GM12878 (cell line): ENCODE measurements at regions of chr3 and their contacts with region 1.

Region 1: DNA sequence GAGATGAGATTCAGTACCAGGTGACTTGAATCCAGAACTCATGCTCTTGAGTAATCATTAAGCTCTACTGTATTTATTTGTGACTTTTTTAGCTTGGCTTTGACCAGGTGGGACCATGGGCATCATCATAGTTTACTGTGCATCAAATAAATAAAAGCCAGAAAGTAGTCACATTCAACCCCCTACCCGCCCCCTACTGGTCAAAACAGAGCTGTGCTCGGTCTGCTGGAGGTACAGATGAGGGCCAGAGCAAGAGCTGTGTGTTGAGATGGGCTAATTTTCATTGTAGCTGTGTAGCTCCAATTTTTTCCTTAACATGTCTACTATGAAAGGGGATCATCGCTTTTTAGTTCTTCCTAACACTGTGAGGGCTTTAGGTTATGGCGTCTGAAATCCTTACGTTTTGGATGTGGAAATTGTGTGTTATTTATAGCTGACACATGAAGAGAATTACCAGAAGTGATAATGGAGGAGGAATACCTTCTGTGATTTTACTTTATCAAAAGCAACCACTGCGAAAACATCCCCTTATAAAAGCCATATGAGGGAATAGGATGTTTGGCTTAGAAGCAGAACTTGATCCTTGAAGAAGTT is 375.1 kb downstream of the PTPRG start:
- DNase-seq: no peak
- ATAC-seq: peak; percentile 79
- H3K4me3 ChIP-seq: no peak overlapping the region
- H3K27ac ChIP-seq: no peak overlapping the region
- H3K4me1 ChIP-seq: no peaks in the 10 kb centered on the region
- H3K27me3 ChIP-seq: no peaks in the 10 kb centered on the region
- CTCF ChIP-seq: peak; percentile 51 to 79 (median 76)
- EP300 ChIP-seq: no peak
- POLR2A ChIP-seq: no peak
- RAD21 ChIP-seq: peak; percentile 55

Region 2: GRCh38 chr3:61574854-61575253 is 361.6 kb before region 1 on chr3:
- CTCF ChIA-PET with region 1: interaction called, 10 read pairs
- POLR2A ChIA-PET with region 1: interaction called, 4 read pairs
- RAD21 ChIA-PET with region 1: no interaction called
- SMC1A ChIA-PET with region 1: no interaction called
- in situ Hi-C with region 1: no loop called
- intact Hi-C with region 1: no loop called
- DNase-seq: no peak
- ATAC-seq: peak; percentile 28
- H3K4me3 ChIP-seq: no peak overlapping the region
- H3K27ac ChIP-seq: no peak overlapping the region
- H3K4me1 ChIP-seq: no peaks in the 10 kb centered on the region
- H3K27me3 ChIP-seq: no peaks in the 10 kb centered on the region
- CTCF ChIP-seq: no peak
- EP300 ChIP-seq: no peak
- POLR2A ChIP-seq: no peak
- RAD21 ChIP-seq: no peak

Region 3: DNA sequence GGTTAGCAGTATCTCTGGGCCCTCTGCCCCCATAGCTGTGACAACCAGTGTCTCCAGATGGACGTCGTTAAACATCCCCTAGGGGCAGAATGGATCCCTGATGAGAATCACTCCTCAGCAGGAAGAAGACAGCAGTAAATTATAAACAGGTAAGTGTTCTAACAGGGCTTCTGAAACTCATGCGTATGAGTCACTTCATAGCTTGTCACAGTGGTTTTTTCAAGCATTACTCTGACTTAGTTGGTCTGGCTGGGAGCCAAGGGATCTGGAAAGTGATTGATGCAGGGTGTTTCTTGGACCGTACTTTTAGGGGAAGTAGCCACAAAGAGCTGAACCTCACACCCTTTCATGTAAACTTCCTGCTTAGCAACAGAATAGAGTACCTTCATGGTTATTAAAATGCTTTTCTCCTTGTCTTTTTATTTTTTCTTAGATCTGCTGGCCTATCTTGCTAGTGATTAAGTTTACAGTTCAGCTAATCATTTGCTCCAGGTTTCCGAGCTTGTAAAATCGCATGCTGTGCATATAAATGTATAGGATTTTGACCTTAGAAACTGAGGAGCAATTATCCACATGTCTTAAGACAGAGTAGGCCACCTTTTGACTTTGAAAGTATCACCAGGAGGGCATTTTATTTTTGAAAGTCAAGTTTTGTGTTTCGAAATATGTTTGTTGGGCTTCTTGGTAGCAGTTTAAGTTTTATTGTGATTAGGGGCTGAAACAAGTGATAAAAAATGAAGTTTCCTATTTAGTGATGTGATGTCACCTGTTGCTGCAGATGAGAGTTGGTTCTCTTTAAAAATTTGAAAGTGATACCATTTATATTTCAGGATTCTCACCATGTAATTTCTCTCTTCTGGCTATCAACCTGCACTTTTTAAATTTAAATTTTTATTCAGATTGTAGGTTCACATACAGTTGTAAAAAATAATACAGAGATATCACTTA is 41.2 kb before region 1 on chr3:
- CTCF ChIA-PET with region 1: interaction called, 29 read pairs
- POLR2A ChIA-PET with region 1: no interaction called
- RAD21 ChIA-PET with region 1: interaction called, 21 read pairs
- SMC1A ChIA-PET with region 1: interaction called, 22 read pairs
- in situ Hi-C with region 1: no loop called
- intact Hi-C with region 1: no loop called
- DNase-seq: peak; percentile 87
- ATAC-seq: peak; percentile 90
- H3K4me3 ChIP-seq: no peak overlapping the region
- H3K27ac ChIP-seq: no peak overlapping the region; the same call in 1 of the 2 replicates
- H3K4me1 ChIP-seq: peaks cover 5% of the 10 kb centered on the region; the same call in 1 of the 2 replicates
- H3K27me3 ChIP-seq: no peaks in the 10 kb centered on the region
- CTCF ChIP-seq: peak in 1 of 3 experiments; percentile 21; a peak in 1 of 6 replicates
- EP300 ChIP-seq: peak; percentile 62 to 92
- POLR2A ChIP-seq: no peak
- RAD21 ChIP-seq: no peak; the same call in 1 of the 2 replicates

Region 4: GRCh38 chr3:61919402-61919801 is 17.0 kb before region 1 on chr3:
- CTCF ChIA-PET with region 1: interaction called, 55 read pairs
- POLR2A ChIA-PET with region 1: interaction called, 4 read pairs
- RAD21 ChIA-PET with region 1: interaction called, 32 read pairs
- SMC1A ChIA-PET with region 1: interaction called, 159 read pairs
- in situ Hi-C with region 1: no loop called
- intact Hi-C with region 1: no loop called
- DNase-seq: no peak
- ATAC-seq: no peak
- H3K4me3 ChIP-seq: no peak overlapping the region
- H3K27ac ChIP-seq: no peak overlapping the region
- H3K4me1 ChIP-seq: no peaks in the 10 kb centered on the region
- H3K27me3 ChIP-seq: peaks cover 0 to 2% of the 10 kb centered on the region in 2 experiments; a peak in 1 of 4 replicates
- CTCF ChIP-seq: no peak
- EP300 ChIP-seq: no peak
- POLR2A ChIP-seq: no peak
- RAD21 ChIP-seq: no peak

Region 5: GRCh38 chr3:62051507-62051906 is 115.1 kb after region 1 on chr3:
- CTCF ChIA-PET with region 1: interaction called, 10 read pairs
- POLR2A ChIA-PET with region 1: no interaction called
- RAD21 ChIA-PET with region 1: interaction called, 6 read pairs
- SMC1A ChIA-PET with region 1: interaction called, 4 read pairs
- in situ Hi-C with region 1: no loop called
- intact Hi-C with region 1: no loop called
- DNase-seq: no peak
- ATAC-seq: peak; percentile 26; the same call in 1 of the 3 replicates
- H3K4me3 ChIP-seq: no peak overlapping the region
- H3K27ac ChIP-seq: no peak overlapping the region
- H3K4me1 ChIP-seq: no peaks in the 10 kb centered on the region
- H3K27me3 ChIP-seq: no peaks in the 10 kb centered on the region; a peak in 1 of 4 replicates
- CTCF ChIP-seq: peak in 2 of 3 experiments; percentile 6 to 22; a peak in 2 of 6 replicates
- EP300 ChIP-seq: no peak
- POLR2A ChIP-seq: no peak
- RAD21 ChIP-seq: no peak